Posterior vena cava (tissue), 2 donors: ENCODE measurements at regions of chr16 and their contacts with region 1.

Region 1: DNA sequence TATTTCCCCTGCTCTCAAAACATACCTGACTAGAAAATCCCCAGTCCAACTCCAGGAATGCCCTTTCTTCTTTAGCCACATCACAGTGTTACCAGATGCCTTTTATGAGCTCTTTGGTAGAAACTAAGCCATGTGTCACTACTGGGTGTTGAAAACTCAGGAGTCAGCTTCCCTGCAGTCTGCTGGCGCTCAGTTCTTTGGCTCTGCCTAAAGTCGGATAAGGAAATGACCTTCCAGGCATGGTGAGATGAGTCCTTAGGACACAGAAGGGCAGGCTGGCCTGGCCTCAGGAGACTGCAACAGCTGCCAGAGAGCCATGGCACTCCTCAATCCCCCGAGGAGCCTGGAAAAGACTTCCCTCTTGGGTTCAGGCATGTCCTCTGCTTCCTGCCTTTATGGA is 89.1 kb downstream of the CDH13 start:
- DNase-seq: peak; percentile 81

Region 2: GRCh38 chr16:82738699-82739098 is 22.9 kb after region 1 on chr16:
- intact Hi-C with region 1: loop called in 1 of 2 experiments (anchors 1 kb)
- DNase-seq: no peak

Region 3: GRCh38 chr16:82990155-82990554 is 274.3 kb after region 1 on chr16:
- intact Hi-C with region 1: no loop called
- DNase-seq: no peak